ENCODE measurements at regions of chr22 and their contacts with region 1.

Region 1: GRCh38 chr22:38347897-38348750 is 30.9 kb upstream of the CSNK1E start:
- DNase-seq: no peak
- H3K4me3 ChIP-seq: no peak overlapping the region
- H3K27ac ChIP-seq: no peak overlapping the region
- H3K27me3 ChIP-seq: no peaks in the 10 kb centered on the region
- CTCF ChIP-seq: no peak

Region 2: GRCh38 chr22:38080850-38081635 is 267.1 kb before region 1 on chr22:
- in situ Hi-C with region 1: loop called (anchors 25 kb)
- DNase-seq: no peak
- H3K4me3 ChIP-seq: peak overlapping the region; percentile 31
- H3K27ac ChIP-seq: no peak overlapping the region
- H3K27me3 ChIP-seq: peaks cover 14% of the 10 kb centered on the region
- CTCF ChIP-seq: no peak

Region 3: DNA sequence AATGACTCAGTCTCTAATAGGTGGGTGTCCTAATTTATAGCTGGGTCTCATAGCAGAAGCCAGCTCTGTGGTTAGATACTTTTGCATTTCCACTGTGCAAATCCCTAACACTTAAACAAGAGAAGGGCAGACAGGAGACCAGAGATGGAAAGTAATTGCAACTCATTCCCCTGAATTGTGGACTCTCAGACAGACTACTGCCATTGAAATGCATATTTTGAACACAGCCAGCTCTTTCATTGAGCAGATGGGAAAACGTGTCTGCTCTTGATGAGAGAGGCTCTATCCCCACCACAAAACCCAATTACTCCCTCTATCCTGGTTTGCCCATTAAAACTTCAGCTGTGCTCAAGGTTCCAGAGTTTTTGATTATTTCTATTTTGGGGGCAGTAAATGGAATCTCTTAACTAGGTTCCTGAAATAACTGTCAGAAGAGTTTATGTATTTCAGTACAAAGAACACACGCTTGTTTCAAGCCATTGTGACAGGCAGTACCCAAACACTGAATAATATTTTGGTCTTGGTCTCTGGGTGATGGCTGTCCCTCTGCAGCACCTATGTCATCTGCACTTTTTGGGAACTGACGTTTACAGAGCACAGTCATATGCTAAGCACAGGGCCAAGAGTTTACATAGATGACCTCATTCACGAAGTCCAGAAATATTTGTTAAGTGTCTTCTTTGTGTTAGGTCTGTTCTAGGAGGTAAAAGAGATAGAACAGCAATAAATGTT is 266.4 kb after region 1 on chr22:
- in situ Hi-C with region 1: no loop called
- DNase-seq: peak; percentile 29
- H3K4me3 ChIP-seq: no peak overlapping the region
- H3K27ac ChIP-seq: no peak overlapping the region
- H3K27me3 ChIP-seq: no peaks in the 10 kb centered on the region
- CTCF ChIP-seq: no peak

Measured in brain microvascular endothelial cell (primary cell).